ENCODE measurements at regions of chr5 and their contacts with region 1.

Region 1: GRCh38 chr5:145825751-145826180 is 9.4 kb downstream of the PRELID2 start:
- DNase-seq: peak in 1 of 3 donors; percentile 25
- ATAC-seq: peak; percentile 61
- H3K4me3 ChIP-seq: no peak overlapping the region
- H3K4me1 ChIP-seq: no peaks in the 10 kb centered on the region
- CTCF ChIP-seq: peak; percentile 24

Region 2: GRCh38 chr5:145544401-145544800 is 281.4 kb before region 1 on chr5:
- intact Hi-C with region 1: no loop called
- DNase-seq: peak in 1 of 3 donors; percentile 25
- ATAC-seq: no peak
- H3K4me3 ChIP-seq: no peak overlapping the region
- H3K4me1 ChIP-seq: peaks cover 6% of the 10 kb centered on the region
- CTCF ChIP-seq: no peak

Region 3: GRCh38 chr5:145887976-145888574 is 62.3 kb after region 1 on chr5:
- intact Hi-C with region 1: loop called in 1 of 2 experiments (anchors 5 kb)
- DNase-seq: peak in 2 of 3 donors; percentile 76 to 89
- ATAC-seq: peak; percentile 98
- H3K4me3 ChIP-seq: no peak overlapping the region
- H3K4me1 ChIP-seq: no peaks in the 10 kb centered on the region
- CTCF ChIP-seq: peak; percentile 68

Region 4: DNA sequence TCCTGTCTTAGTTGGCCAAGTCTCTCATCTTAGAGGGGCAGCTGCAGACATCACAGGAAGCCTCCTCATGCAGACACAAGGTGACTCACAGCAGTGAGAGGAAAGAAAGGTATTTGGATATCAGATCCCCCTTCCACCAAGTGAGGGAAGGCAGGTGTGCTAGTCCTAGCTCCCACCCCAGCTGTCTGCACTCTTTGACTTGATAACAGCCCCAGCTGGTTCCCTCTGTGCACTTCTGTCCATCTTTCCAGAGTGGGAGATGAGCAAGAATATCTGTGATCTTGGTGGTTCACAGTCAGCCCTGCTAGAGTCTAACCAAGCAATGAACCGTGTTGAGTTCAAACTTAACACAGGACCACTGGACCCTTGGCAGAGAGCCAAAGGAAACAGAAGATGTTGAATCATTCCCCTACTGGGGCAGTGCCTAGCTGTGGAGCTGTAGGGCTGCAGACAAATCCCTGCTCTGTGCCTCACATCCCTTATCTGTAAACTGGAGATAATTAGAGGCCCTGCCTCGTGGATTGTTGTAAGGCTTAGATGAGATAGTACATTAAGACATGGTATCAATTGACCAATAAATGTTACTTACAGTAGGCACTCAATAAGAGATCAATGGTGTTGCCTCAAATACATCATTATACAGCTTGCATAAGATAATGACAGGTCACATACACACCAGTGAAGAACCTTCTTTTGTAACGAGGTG is 149.7 kb after region 1 on chr5:
- intact Hi-C with region 1: no loop called
- DNase-seq: peak in 1 of 3 donors; percentile 40
- ATAC-seq: peak; percentile 12
- H3K4me3 ChIP-seq: no peak overlapping the region
- H3K4me1 ChIP-seq: peaks cover 35% of the 10 kb centered on the region
- CTCF ChIP-seq: no peak

Measured in mucosa of descending colon (tissue), 3 donors.